Naive thymus-derived CD4-positive, alpha-beta T cell (primary cell): ENCODE measurements at regions of chr13 and their contacts with region 1.

Region 1: DNA sequence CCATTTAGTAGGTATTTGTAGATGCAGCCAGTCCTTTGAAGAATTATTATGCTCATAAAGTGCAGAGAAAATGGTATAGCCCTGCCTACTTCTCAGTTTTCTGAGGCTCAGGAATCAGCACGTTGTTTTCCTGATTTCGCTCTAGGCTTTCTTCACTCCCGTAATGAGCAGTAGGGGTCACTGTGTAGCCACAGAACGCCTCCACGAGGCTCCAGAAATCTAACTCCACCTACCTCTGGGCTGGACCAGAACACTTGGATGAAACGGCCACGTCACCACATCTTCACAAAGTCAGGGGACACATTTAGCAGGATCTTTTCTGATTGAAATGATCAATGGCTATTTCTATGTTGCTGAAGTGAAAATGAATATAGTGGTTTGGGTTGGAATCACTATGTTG is 49.8 kb upstream of the GTF3A start:
- DNase-seq: peak; percentile 16 to 57 (median 46)
- ATAC-seq: peak; percentile 92
- H3K4me3 ChIP-seq: no peak overlapping the region
- H3K4me3 Mint-ChIP-seq: peak overlapping the region in 1 of 10 donors; percentile 19
- H3K27ac ChIP-seq: no peak overlapping the region
- H3K27ac Mint-ChIP-seq: no peak overlapping the region
- H3K4me1 ChIP-seq: no peaks in the 10 kb centered on the region
- H3K4me1 Mint-ChIP-seq: peaks cover 0 to 17% (median 4%) of the 10 kb centered on the region in 7 donors
- H3K27me3 ChIP-seq: no peaks in the 10 kb centered on the region
- H3K27me3 Mint-ChIP-seq: peaks cover 10 to 26% (median 17%) of the 10 kb centered on the region in 5 donors

Region 2: GRCh38 chr13:26589754-26590153 is 784.9 kb before region 1 on chr13:
- CTCF ChIA-PET with region 1: no interaction called
- POLR2A ChIA-PET with region 1: no interaction called
- intact Hi-C with region 1: no loop called
- DNase-seq: no peak
- ATAC-seq: no peak
- H3K4me3 ChIP-seq: no peak overlapping the region
- H3K4me3 Mint-ChIP-seq: no peak overlapping the region
- H3K27ac ChIP-seq: no peak overlapping the region
- H3K27ac Mint-ChIP-seq: no peak overlapping the region
- H3K4me1 ChIP-seq: no peaks in the 10 kb centered on the region
- H3K4me1 Mint-ChIP-seq: no peaks in the 10 kb centered on the region
- H3K27me3 ChIP-seq: no peaks in the 10 kb centered on the region
- H3K27me3 Mint-ChIP-seq: peaks cover 14 to 37% (median 31%) of the 10 kb centered on the region in 5 donors

Region 3: GRCh38 chr13:27406178-27406939 is 31.7 kb after region 1 on chr13:
- CTCF ChIA-PET with region 1: no interaction called
- POLR2A ChIA-PET with region 1: no interaction called
- intact Hi-C with region 1: loop called in 1 of 2 experiments (anchors 1 kb)
- DNase-seq: peak in 7 of 9 donors; percentile 25 to 57 (median 48)
- ATAC-seq: peak; percentile 71
- H3K4me3 ChIP-seq: no peak overlapping the region
- H3K4me3 Mint-ChIP-seq: no peak overlapping the region
- H3K27ac ChIP-seq: no peak overlapping the region
- H3K27ac Mint-ChIP-seq: no peak overlapping the region
- H3K4me1 ChIP-seq: no peaks in the 10 kb centered on the region
- H3K4me1 Mint-ChIP-seq: peaks cover 0 to 6% (median 0%) of the 10 kb centered on the region in 7 donors
- H3K27me3 ChIP-seq: no peaks in the 10 kb centered on the region
- H3K27me3 Mint-ChIP-seq: peaks cover 0 to 37% (median 9%) of the 10 kb centered on the region in 5 donors

Region 4: GRCh38 chr13:27533155-27533643 is 158.5 kb after region 1 on chr13:
- CTCF ChIA-PET with region 1: no interaction called
- POLR2A ChIA-PET with region 1: no interaction called
- intact Hi-C with region 1: loop called in 1 of 2 experiments (anchors 1 kb)
- DNase-seq: peak in 7 of 9 donors; percentile 17 to 51 (median 42)
- ATAC-seq: peak; percentile 83
- H3K4me3 ChIP-seq: no peak overlapping the region
- H3K4me3 Mint-ChIP-seq: peak overlapping the region in 6 of 10 donors; percentile 26 to 52 (median 44)
- H3K27ac ChIP-seq: no peak overlapping the region
- H3K27ac Mint-ChIP-seq: no peak overlapping the region
- H3K4me1 ChIP-seq: peaks cover 0 to 9% of the 10 kb centered on the region in 2 donors
- H3K4me1 Mint-ChIP-seq: peaks cover 0 to 12% (median 10%) of the 10 kb centered on the region in 7 donors
- H3K27me3 ChIP-seq: no peaks in the 10 kb centered on the region
- H3K27me3 Mint-ChIP-seq: peaks cover 0 to 17% (median 5%) of the 10 kb centered on the region in 5 donors

Region 5: DNA sequence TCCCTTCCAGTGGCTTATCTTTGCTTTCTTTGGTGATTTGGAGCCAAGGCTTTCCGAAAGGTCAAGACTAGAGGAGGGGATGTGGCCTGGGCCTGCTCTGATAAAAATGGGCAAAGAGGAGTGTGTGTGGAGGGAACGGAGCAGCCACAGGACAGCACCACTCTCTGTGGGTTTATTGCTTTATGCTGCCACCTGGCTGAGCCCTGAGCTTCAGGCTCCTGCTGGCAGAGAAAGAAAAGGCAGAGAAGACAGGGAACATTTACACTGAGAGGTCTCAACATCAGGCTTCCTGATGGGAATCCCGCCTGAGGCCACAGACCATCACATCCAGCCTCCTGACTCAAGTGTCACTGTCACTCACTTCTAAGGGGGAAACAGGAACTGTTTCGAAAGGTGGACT is 408.5 kb after region 1 on chr13:
- CTCF ChIA-PET with region 1: no interaction called
- POLR2A ChIA-PET with region 1: no interaction called
- intact Hi-C with region 1: loop called in 1 of 2 experiments (anchors 2 kb)
- DNase-seq: no peak
- ATAC-seq: no peak
- H3K4me3 ChIP-seq: no peak overlapping the region
- H3K4me3 Mint-ChIP-seq: no peak overlapping the region
- H3K27ac ChIP-seq: no peak overlapping the region
- H3K27ac Mint-ChIP-seq: peak overlapping the region in 1 of 9 donors; percentile 3
- H3K4me1 ChIP-seq: no peaks in the 10 kb centered on the region
- H3K4me1 Mint-ChIP-seq: no peaks in the 10 kb centered on the region
- H3K27me3 ChIP-seq: no peaks in the 10 kb centered on the region
- H3K27me3 Mint-ChIP-seq: peaks cover 33 to 59% (median 56%) of the 10 kb centered on the region in 5 donors